Activated CD8-positive, alpha-beta T cell treated with anti-CD3 and anti-CD28 coated beads for 36 hours (primary cell): ENCODE measurements at regions of chr19 and their contacts with region 1.

Region 1: GRCh38 chr19:47013041-47013517 is 6.6 kb upstream of the NPAS1 start:
- DNase-seq: peak; percentile 65
- ATAC-seq: peak; percentile 96
- H3K4me3 Mint-ChIP-seq: no peak overlapping the region
- H3K27ac Mint-ChIP-seq: no peak overlapping the region
- H3K4me1 Mint-ChIP-seq: peaks cover 9% of the 10 kb centered on the region
- H3K27me3 Mint-ChIP-seq: peaks cover 4% of the 10 kb centered on the region
- CTCF ChIP-seq: peak; percentile 100

Region 2: GRCh38 chr19:46674416-46675183 is 338.5 kb before region 1 on chr19:
- CTCF ChIA-PET with region 1: no interaction called
- POLR2A ChIA-PET with region 1: no interaction called
- intact Hi-C with region 1: no loop called
- DNase-seq: no peak
- ATAC-seq: no peak
- H3K4me3 Mint-ChIP-seq: no peak overlapping the region
- H3K27ac Mint-ChIP-seq: no peak overlapping the region
- H3K4me1 Mint-ChIP-seq: peaks cover 6% of the 10 kb centered on the region
- H3K27me3 Mint-ChIP-seq: no peaks in the 10 kb centered on the region
- CTCF ChIP-seq: no peak

Region 3: DNA sequence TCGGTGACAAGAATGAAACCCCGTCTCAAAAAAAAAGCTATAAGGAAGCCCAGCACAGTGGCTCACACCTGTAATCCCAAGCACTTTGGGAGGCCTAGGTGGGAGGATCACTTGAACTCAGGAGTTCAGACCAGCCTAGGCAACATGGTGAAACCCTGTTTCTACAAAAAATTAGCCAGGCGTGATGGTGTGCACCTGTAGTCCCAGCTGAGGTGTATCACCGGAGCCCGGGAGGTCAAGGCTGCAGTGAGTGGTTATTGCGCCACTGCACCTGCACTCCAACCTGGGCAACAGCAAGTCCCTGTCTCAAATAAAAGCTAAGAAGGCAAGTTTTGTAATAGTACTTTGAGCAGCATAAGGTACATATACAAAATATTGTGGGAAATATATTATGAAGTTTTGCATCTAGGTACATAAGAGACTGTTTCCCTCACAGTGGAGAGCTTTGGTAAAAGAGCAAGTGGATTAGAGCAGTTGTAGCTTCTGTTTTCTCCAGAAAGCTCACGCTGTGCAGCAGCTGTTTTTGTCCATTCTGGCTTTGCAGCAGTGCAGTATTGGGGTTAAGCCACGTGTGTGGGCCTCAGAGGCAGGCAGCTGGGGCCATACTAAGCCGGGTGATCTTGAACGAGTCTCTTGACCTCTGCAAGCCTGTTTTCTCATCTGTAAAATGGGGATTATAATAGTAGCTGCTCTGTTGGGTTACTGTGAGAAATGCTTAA is 116.8 kb before region 1 on chr19:
- CTCF ChIA-PET with region 1: interaction called, 10 read pairs
- POLR2A ChIA-PET with region 1: no interaction called
- intact Hi-C with region 1: no loop called
- DNase-seq: no peak
- ATAC-seq: no peak
- H3K4me3 Mint-ChIP-seq: no peak overlapping the region
- H3K27ac Mint-ChIP-seq: no peak overlapping the region
- H3K4me1 Mint-ChIP-seq: peaks cover 33% of the 10 kb centered on the region
- H3K27me3 Mint-ChIP-seq: no peaks in the 10 kb centered on the region
- CTCF ChIP-seq: no peak

Region 4: DNA sequence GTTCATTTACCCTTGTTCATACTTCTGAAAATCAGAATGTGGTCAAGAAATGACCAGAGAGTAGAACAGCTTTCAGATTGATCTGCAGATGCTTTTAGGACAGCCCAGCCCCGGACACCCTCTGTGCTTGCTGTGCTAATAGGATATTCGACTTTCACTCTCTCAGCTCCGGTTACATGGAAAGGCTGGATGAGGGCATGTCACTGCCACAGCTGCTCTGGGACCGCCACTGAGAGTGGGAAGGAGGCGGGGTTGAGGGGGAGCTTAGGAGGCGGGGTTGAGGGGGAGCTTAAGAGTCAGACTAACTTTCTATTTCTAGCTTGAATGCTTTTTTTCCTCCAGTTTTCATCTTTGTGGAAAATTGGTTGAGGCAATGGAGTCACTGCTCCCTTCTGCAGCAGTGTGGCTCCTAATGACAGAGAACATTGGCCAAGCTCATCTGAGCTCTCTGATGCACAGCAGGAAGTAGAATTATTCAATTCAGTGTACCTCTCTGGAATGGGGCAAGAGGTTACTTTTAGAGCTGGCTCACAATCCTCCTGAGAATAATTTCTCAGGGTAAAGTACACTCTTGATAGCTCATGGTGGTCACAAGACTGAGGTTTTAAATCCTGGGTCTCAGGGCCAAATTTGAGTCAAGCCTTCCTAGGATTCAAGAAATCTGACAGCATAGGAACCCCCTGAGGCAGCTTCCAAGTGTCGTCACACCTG is 68.0 kb before region 1 on chr19:
- CTCF ChIA-PET with region 1: interaction called, 11 read pairs
- POLR2A ChIA-PET with region 1: no interaction called
- intact Hi-C with region 1: no loop called
- DNase-seq: no peak
- ATAC-seq: no peak
- H3K4me3 Mint-ChIP-seq: no peak overlapping the region
- H3K27ac Mint-ChIP-seq: no peak overlapping the region
- H3K4me1 Mint-ChIP-seq: peaks cover 15% of the 10 kb centered on the region
- H3K27me3 Mint-ChIP-seq: no peaks in the 10 kb centered on the region
- CTCF ChIP-seq: no peak

Region 5: DNA sequence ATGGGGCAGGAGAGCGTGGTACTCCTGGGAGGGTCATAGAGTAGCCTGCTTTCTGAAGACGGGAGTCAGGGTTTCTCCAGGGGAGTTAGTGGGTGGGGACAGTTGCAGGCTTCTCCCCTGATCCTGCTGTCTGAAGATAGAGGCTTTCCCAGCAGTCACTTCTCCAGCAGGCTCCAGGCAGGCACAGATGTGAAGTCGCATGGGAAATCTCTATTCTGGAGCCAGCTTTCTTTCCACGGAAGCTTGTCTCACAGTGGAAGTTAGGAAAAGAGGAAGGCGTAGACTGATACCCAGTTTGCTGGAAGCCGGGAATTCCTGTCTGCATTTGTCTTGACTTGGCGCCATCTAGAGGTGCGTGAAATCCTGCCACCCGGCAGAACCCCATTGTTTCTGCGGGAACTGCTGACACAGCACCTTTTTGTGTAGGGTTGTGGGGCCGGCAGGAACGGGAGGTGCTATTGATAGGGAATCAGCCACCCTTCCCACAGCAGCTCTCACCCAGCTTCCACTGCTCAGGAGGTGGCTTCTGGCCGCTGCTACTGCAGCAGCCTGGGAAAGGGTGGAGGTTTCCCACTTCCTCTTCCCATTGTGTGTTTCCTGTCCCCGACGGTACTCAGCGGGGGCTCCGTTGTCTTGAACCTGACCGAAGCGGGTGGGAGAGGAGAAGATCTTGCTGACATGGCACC is 21.9 kb before region 1 on chr19:
- CTCF ChIA-PET with region 1: interaction called, 50 read pairs
- POLR2A ChIA-PET with region 1: interaction called, 3 read pairs
- intact Hi-C with region 1: no loop called
- DNase-seq: peak; percentile 73
- ATAC-seq: peak; percentile 85
- H3K4me3 Mint-ChIP-seq: no peak overlapping the region
- H3K27ac Mint-ChIP-seq: no peak overlapping the region
- H3K4me1 Mint-ChIP-seq: peaks cover 11% of the 10 kb centered on the region
- H3K27me3 Mint-ChIP-seq: no peaks in the 10 kb centered on the region
- CTCF ChIP-seq: peak; percentile 88

Region 6: GRCh38 chr19:47057328-47057727 is 44.2 kb after region 1 on chr19:
- CTCF ChIA-PET with region 1: interaction called, 11 read pairs
- POLR2A ChIA-PET with region 1: no interaction called
- intact Hi-C with region 1: no loop called
- DNase-seq: no peak
- ATAC-seq: no peak
- H3K4me3 Mint-ChIP-seq: no peak overlapping the region
- H3K27ac Mint-ChIP-seq: no peak overlapping the region
- H3K4me1 Mint-ChIP-seq: no peaks in the 10 kb centered on the region
- H3K27me3 Mint-ChIP-seq: no peaks in the 10 kb centered on the region
- CTCF ChIP-seq: no peak

Region 7: GRCh38 chr19:47124937-47125668 is 112.0 kb after region 1 on chr19:
- CTCF ChIA-PET with region 1: interaction called, 42 read pairs
- POLR2A ChIA-PET with region 1: no interaction called
- intact Hi-C with region 1: no loop called
- DNase-seq: no peak
- ATAC-seq: peak; percentile 66
- H3K4me3 Mint-ChIP-seq: no peak overlapping the region
- H3K27ac Mint-ChIP-seq: no peak overlapping the region
- H3K4me1 Mint-ChIP-seq: no peaks in the 10 kb centered on the region
- H3K27me3 Mint-ChIP-seq: no peaks in the 10 kb centered on the region
- CTCF ChIP-seq: peak; percentile 86